PC-9 (cell line): ENCODE measurements at regions of chr11 and their contacts with region 1.

Region 1: GRCh38 chr11:64358907-64359711 is at the start of gene RPS6KA4:
- DNase-seq: peak; percentile 54 to 79
- H3K4me3 ChIP-seq: peak within 1 kb of the TSS; percentile 91
- H3K27ac ChIP-seq: peak within 1 kb of the TSS; percentile 59
- H3K4me1 ChIP-seq: peaks cover 42% of the 10 kb centered on the region
- H3K27me3 ChIP-seq: no peaks in the 10 kb centered on the region
- CTCF ChIP-seq: no peak
- total RNA-seq, gene RPS6KA4: 60.6 and 64.3 TPM in 2 replicates

Region 2: GRCh38 chr11:64204464-64204989 is 154.6 kb before region 1 on chr11:
- CTCF ChIA-PET with region 1: interaction called, 5 read pairs
- POLR2A ChIA-PET with region 1: no interaction called
- intact Hi-C with region 1: loop called (anchors 1 kb)
- DNase-seq: peak; percentile 85 to 93
- H3K4me3 ChIP-seq: no peak overlapping the region
- H3K27ac ChIP-seq: no peak overlapping the region
- H3K4me1 ChIP-seq: 0 out of 2 replicates have a peak, but pooled peaks cover 4% of the 10 kb centered on the region
- H3K27me3 ChIP-seq: no peaks in the 10 kb centered on the region
- CTCF ChIP-seq: peak; percentile 88

Region 3: DNA sequence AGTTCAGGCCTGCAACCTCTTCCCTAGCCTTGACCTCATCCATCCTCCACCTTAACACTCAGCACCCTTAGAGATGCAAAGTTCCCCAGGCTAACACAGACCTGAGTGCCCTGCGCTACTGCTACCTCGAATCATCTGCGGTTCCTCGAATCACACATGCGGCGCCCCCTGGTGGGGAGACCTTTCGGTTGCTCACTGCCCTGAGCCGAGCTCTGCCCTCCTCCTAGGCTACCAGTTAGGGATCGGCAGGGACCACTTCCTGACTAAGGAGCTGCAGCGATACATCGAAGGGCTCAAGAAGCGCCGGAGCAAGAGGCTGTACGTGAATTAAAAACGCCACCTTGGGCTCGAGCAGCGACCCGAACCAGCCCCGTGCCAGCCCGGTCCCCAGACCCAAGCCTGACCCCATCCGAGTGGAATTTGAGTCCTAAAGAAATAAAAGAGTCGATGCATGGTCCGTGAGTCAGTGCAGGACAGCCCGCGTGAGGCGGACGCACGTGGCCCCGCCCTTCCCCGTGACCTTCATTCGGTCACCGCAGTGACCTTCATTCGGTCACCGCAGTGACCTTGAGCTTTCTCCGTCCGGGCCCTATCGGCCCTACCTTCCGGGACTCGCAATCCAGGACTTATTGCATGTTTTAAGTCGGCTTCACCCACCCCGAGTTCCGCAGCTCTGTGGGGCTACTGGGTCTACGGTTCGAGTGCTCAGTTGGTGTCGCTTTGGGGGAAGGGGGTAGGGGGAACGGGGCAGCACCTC is 54.6 kb before region 1 on chr11:
- CTCF ChIA-PET with region 1: interaction called, 15 read pairs
- POLR2A ChIA-PET with region 1: interaction called, 7 read pairs
- intact Hi-C with region 1: loop called (anchors 1 kb)
- DNase-seq: peak; percentile 81 to 95
- H3K4me3 ChIP-seq: peak overlapping the region; percentile 74
- H3K27ac ChIP-seq: peak overlapping the region; percentile 71
- H3K4me1 ChIP-seq: peaks cover 27% of the 10 kb centered on the region
- H3K27me3 ChIP-seq: 0 out of 2 replicates have a peak, but pooled peaks cover 7% of the 10 kb centered on the region
- CTCF ChIP-seq: peak; percentile 97

Region 4: DNA sequence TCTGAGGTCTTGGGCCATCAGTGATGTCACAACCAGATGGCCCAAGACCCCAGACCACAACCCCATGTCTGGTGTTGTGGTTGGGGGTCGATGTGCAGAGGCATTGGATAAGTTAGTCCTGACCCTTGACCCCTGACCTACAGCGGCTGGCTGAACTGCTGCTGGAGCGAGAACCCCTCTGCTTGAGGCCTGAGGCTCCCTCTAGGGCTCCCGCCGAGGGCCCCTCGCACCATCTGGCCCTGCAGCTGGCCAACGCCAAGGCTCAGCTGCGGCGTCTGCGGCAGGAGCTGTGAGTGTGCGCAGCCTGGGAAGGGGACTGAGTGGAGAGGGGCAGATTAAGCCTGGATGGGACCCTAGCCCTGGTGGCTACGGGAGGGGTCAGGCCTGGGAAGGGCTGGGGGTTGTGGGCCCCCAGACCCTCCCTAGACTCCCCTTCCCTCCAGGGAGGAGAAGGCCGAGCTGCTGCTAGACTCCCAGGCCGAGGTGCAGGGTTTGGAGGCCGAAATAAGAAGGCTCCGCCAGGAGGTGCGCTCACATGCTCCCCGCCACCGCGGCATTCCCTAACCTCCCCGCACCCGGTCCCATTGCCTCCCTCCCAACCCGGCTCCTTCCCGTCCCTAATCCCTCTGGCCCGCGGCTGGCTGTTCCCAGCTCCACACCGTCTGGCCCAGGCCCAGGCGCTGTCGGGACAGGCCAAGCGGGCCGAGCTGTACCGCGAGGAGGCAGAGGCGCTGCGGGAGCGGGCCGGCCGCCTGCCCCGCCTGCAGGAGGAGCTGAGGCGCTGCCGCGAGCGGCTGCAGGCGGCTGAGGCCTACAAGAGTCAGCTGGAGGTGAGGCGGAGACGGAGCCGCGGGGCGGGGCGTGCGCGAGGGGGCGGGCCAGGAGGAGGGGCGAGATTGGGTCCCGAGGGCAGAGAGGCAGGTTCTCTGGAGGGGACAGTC is 17.0 kb before region 1 on chr11:
- CTCF ChIA-PET with region 1: interaction called, 36 read pairs
- POLR2A ChIA-PET with region 1: no interaction called
- intact Hi-C with region 1: no loop called
- DNase-seq: peak; percentile 83 to 98
- H3K4me3 ChIP-seq: peak overlapping the region; percentile 49; the same call in 1 of the 2 replicates
- H3K27ac ChIP-seq: no peak overlapping the region
- H3K4me1 ChIP-seq: peaks cover 16% of the 10 kb centered on the region
- H3K27me3 ChIP-seq: no peaks in the 10 kb centered on the region
- CTCF ChIP-seq: peak; percentile 58; the same call in 1 of the 2 replicates

Region 5: GRCh38 chr11:64378335-64378880 is 19.3 kb after region 1 on chr11:
- CTCF ChIA-PET with region 1: interaction called, 10 read pairs
- POLR2A ChIA-PET with region 1: interaction called, 10 read pairs
- intact Hi-C with region 1: no loop called
- DNase-seq: no peak
- H3K4me3 ChIP-seq: no peak overlapping the region
- H3K27ac ChIP-seq: no peak overlapping the region
- H3K4me1 ChIP-seq: peaks cover 11% of the 10 kb centered on the region
- H3K27me3 ChIP-seq: no peaks in the 10 kb centered on the region
- CTCF ChIP-seq: no peak

Region 6: GRCh38 chr11:64489831-64490441 is 130.8 kb after region 1 on chr11:
- CTCF ChIA-PET with region 1: interaction called, 3 read pairs
- POLR2A ChIA-PET with region 1: no interaction called
- intact Hi-C with region 1: loop called (anchors 5 kb)
- DNase-seq: peak in 1 of 2 experiments; percentile 63
- H3K4me3 ChIP-seq: no peak overlapping the region
- H3K27ac ChIP-seq: no peak overlapping the region
- H3K4me1 ChIP-seq: no peaks in the 10 kb centered on the region
- H3K27me3 ChIP-seq: peaks cover 94% of the 10 kb centered on the region
- CTCF ChIP-seq: peak; percentile 72

Region 7: DNA sequence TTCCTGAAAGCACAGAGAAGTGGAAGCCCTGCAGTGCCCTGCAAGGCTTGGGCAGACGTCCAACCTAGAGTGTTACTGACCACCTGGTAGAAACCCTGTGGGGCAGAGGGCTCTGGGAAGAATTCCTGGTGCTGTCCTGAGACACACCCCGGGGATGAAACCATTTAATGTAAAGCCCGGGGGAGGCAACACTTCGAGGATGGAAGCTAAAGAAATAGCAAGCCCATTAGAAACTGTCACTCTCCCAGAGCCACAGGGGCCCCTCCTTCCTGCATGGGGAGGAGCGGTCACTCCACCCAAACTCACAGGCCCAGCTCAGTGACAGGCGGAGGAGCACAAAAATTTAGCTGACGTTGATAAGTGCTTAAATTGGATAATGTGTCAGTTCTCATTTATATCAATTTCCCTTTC is 306.3 kb after region 1 on chr11:
- CTCF ChIA-PET with region 1: interaction called, 12 read pairs
- POLR2A ChIA-PET with region 1: interaction called, 12 read pairs
- intact Hi-C with region 1: no loop called
- DNase-seq: peak; percentile 53 to 65
- H3K4me3 ChIP-seq: no peak overlapping the region
- H3K27ac ChIP-seq: no peak overlapping the region
- H3K4me1 ChIP-seq: no peaks in the 10 kb centered on the region
- H3K27me3 ChIP-seq: peaks cover 15% of the 10 kb centered on the region
- CTCF ChIP-seq: no peak